ENCODE measurements at regions of chr12 and their contacts with region 1.

Region 1: GRCh38 chr12:7835116-7835515 is 37.6 kb downstream of the SLC2A14 start:
- DNase-seq: no peak
- ATAC-seq: no peak
- H3K4me3 ChIP-seq: no peak overlapping the region
- H3K4me3 Mint-ChIP-seq: no peak overlapping the region
- H3K27ac ChIP-seq: no peak overlapping the region
- H3K27ac Mint-ChIP-seq: no peak overlapping the region
- H3K4me1 ChIP-seq: no peaks in the 10 kb centered on the region
- H3K4me1 Mint-ChIP-seq: peaks cover 0 to 3% (median 3%) of the 10 kb centered on the region in 3 donors
- H3K27me3 ChIP-seq: peaks cover 0 to 2% of the 10 kb centered on the region in 2 experiments
- H3K27me3 Mint-ChIP-seq: no peaks in the 10 kb centered on the region

Region 2: GRCh38 chr12:7731486-7731885 is 103.6 kb before region 1 on chr12:
- CTCF ChIA-PET with region 1: no interaction called
- POLR2A ChIA-PET with region 1: no interaction called
- DNase-seq: no peak
- ATAC-seq: no peak
- H3K4me3 ChIP-seq: no peak overlapping the region
- H3K4me3 Mint-ChIP-seq: no peak overlapping the region
- H3K27ac ChIP-seq: no peak overlapping the region
- H3K27ac Mint-ChIP-seq: no peak overlapping the region
- H3K4me1 ChIP-seq: no peaks in the 10 kb centered on the region
- H3K4me1 Mint-ChIP-seq: no peaks in the 10 kb centered on the region
- H3K27me3 ChIP-seq: peaks cover 0 to 3% of the 10 kb centered on the region in 2 experiments
- H3K27me3 Mint-ChIP-seq: peaks cover 0 to 4% of the 10 kb centered on the region in 2 donors

Region 3: GRCh38 chr12:7884689-7885088 is 49.6 kb after region 1 on chr12:
- CTCF ChIA-PET with region 1: no interaction called
- POLR2A ChIA-PET with region 1: interaction called in 1 of 2 experiments, 11 read pairs
- DNase-seq: no peak
- ATAC-seq: no peak
- H3K4me3 ChIP-seq: no peak overlapping the region
- H3K4me3 Mint-ChIP-seq: no peak overlapping the region
- H3K27ac ChIP-seq: no peak overlapping the region
- H3K27ac Mint-ChIP-seq: no peak overlapping the region
- H3K4me1 ChIP-seq: no peaks in the 10 kb centered on the region
- H3K4me1 Mint-ChIP-seq: no peaks in the 10 kb centered on the region
- H3K27me3 ChIP-seq: no peaks in the 10 kb centered on the region
- H3K27me3 Mint-ChIP-seq: peaks cover 2 to 4% of the 10 kb centered on the region in 2 donors

Region 4: DNA sequence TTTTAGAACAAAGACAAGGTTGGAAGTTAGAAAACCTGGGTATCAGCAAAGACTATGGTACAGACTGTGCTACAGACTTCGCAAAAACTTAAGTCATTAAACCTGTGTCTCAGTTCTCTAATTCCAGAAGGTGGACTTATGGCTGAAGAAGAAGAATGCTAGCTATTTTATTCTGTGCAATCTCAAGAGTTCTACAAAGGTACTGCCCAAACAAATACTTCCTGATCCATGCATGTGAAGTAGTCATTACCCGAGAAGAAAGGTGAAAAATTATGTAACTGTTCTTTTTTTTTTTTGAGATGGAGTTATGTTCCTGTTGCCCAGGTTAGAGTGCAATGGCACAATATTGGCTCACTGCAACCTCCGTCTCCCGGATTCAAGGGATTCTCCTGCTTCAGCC is 146.3 kb after region 1 on chr12:
- CTCF ChIA-PET with region 1: no interaction called
- POLR2A ChIA-PET with region 1: no interaction called
- DNase-seq: no peak
- ATAC-seq: no peak
- H3K4me3 ChIP-seq: no peak overlapping the region
- H3K4me3 Mint-ChIP-seq: no peak overlapping the region
- H3K27ac ChIP-seq: no peak overlapping the region
- H3K27ac Mint-ChIP-seq: no peak overlapping the region
- H3K4me1 ChIP-seq: no peaks in the 10 kb centered on the region
- H3K4me1 Mint-ChIP-seq: peaks cover 0 to 10% (median 0%) of the 10 kb centered on the region in 3 donors
- H3K27me3 ChIP-seq: peaks cover 0 to 2% of the 10 kb centered on the region in 2 experiments
- H3K27me3 Mint-ChIP-seq: no peaks in the 10 kb centered on the region

Region 5: GRCh38 chr12:8026291-8026900 is 191.3 kb after region 1 on chr12:
- CTCF ChIA-PET with region 1: no interaction called
- POLR2A ChIA-PET with region 1: no interaction called
- DNase-seq: peak; percentile 90 to 98 (median 97)
- ATAC-seq: peak; percentile 92 to 96 (median 94)
- H3K4me3 ChIP-seq: peak overlapping the region; percentile 82 to 94
- H3K4me3 Mint-ChIP-seq: peak overlapping the region; percentile 89 to 97 (median 94)
- H3K27ac ChIP-seq: peak overlapping the region; percentile 100
- H3K27ac Mint-ChIP-seq: peak overlapping the region; percentile 97 to 98
- H3K4me1 ChIP-seq: peaks cover 2 to 20% of the 10 kb centered on the region in 2 experiments
- H3K4me1 Mint-ChIP-seq: peaks cover 14 to 19% (median 17%) of the 10 kb centered on the region in 3 donors
- H3K27me3 ChIP-seq: no peaks in the 10 kb centered on the region
- H3K27me3 Mint-ChIP-seq: no peaks in the 10 kb centered on the region